Activated CD4-positive, alpha-beta memory T cell treated with anti-CD3 and anti-CD28 coated beads for 36 hours (primary cell): ENCODE measurements at regions of chr7 and their contacts with region 1.

Region 1: GRCh38 chr7:27784393-27785053 is 44.6 kb downstream of the TAX1BP1 start:
- DNase-seq: no peak
- H3K4me3 Mint-ChIP-seq: no peak overlapping the region
- H3K27ac Mint-ChIP-seq: no peak overlapping the region
- H3K4me1 Mint-ChIP-seq: peaks cover 33% of the 10 kb centered on the region
- H3K27me3 Mint-ChIP-seq: no peaks in the 10 kb centered on the region

Region 2: DNA sequence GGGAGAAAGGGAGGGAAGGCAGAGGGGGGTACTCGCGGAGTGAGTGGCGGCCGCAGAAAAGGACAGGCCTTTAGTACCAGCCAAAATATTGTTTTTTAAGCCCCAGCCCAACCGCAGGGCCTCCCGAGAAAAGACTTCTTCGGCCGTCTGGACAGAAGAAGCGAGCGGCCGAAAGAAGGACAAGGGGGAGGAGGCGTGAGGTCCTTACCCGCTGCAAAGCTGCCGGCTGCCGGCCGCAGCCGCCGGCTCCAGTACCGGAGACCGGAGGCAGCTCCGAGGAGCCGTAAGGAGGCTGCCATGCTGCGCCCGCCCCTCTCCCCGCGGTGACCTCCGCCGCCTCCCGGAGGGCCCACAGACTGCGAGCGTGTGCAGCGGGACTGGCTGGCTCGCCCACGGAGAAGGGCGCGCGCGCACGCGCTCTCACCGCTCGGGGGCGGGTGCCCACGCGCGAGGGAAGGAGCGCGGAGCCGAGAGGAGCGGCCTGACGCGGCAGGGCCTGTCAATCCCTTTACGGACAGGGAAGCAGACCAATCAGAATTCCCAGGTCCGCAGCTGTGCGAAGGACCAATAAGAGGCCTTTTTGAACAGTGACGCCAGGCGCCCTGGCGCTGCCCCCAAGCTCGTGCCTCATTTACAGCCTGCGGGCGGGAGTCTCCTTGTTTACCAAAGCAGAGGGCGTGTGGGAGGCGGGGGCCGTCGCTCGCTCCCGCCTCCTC is 121.9 kb before region 1 on chr7 and contains the start of gene HIBADH:
- CTCF ChIA-PET with region 1: no interaction called
- POLR2A ChIA-PET with region 1: no interaction called
- intact Hi-C with region 1: loop called (anchors 1 kb)
- DNase-seq: peak; percentile 96
- H3K4me3 Mint-ChIP-seq: peak within 1 kb of the TSS; percentile 76
- H3K27ac Mint-ChIP-seq: peak within 1 kb of the TSS; percentile 76
- H3K4me1 Mint-ChIP-seq: peaks cover 14% of the 10 kb centered on the region
- H3K27me3 Mint-ChIP-seq: no peaks in the 10 kb centered on the region
- total RNA-seq, gene HIBADH: 21.9 to 22.6 TPM

Region 3: DNA sequence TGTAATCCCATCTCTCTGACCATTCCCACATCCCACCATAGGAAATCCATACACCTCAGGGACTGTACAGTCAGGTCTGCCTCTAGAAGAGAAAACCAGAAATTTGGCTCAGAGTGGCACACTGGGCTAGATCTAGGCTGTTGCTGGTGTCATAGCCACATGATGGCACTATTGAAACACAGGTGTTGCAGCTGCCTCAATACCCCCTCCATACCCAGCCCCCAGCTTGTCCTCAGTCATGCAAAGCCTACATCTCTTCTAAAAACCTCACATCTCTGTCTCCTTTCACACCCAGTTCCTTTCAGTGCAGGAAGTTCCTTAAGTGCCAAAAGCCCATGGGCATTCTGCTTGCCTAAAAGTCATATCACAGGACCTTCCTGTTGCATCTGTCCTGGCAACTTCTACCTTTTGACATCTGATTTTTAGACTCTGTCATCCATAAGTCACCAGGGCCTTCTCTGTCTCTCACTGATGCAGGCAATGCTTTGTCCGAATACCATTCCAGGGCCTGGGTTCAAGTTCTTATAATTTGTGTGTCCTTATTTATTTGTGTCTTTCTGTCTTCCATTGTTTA is 94.8 kb before region 1 on chr7:
- CTCF ChIA-PET with region 1: no interaction called
- POLR2A ChIA-PET with region 1: no interaction called
- intact Hi-C with region 1: loop called (anchors 1 kb)
- DNase-seq: peak; percentile 24
- H3K4me3 Mint-ChIP-seq: no peak overlapping the region
- H3K27ac Mint-ChIP-seq: no peak overlapping the region
- H3K4me1 Mint-ChIP-seq: no peaks in the 10 kb centered on the region
- H3K27me3 Mint-ChIP-seq: peaks cover 11% of the 10 kb centered on the region

Region 4: GRCh38 chr7:27739909-27740448 is 44.5 kb before region 1 on chr7 and contains the start of gene TAX1BP1:
- CTCF ChIA-PET with region 1: no interaction called
- POLR2A ChIA-PET with region 1: interaction called, 5 read pairs
- intact Hi-C with region 1: loop called (anchors 1 kb)
- DNase-seq: peak; percentile 97
- H3K4me3 Mint-ChIP-seq: peak within 1 kb of the TSS; percentile 87
- H3K27ac Mint-ChIP-seq: peak within 1 kb of the TSS; percentile 99
- H3K4me1 Mint-ChIP-seq: peaks cover 39% of the 10 kb centered on the region
- H3K27me3 Mint-ChIP-seq: no peaks in the 10 kb centered on the region
- total RNA-seq, gene TAX1BP1: 104 to 105 TPM

Region 5: DNA sequence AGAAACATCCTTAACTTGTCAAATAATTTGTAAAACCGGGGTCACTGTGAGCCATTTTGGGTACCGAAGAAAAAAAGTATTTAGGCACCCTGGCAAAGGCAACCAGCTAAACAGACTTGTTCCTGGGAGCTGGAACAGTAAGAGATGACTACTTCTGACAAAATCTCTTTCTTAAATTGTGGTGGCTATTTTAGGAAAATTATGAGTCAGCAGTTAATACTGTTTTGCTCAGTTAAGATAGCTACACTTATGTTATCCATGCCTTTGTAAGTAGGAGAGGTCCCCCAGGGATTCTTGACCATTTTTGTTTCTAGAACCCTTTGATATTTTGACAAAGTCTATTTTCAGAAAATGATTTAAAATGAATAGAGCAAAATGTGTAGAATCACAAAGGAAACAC is 24.1 kb after region 1 on chr7:
- CTCF ChIA-PET with region 1: no interaction called
- POLR2A ChIA-PET with region 1: no interaction called
- intact Hi-C with region 1: no loop called
- DNase-seq: no peak
- H3K4me3 Mint-ChIP-seq: no peak overlapping the region
- H3K27ac Mint-ChIP-seq: no peak overlapping the region
- H3K4me1 Mint-ChIP-seq: no peaks in the 10 kb centered on the region
- H3K27me3 Mint-ChIP-seq: no peaks in the 10 kb centered on the region